GM12878 (cell line): ENCODE measurements at regions of chr17 and their contacts with region 1.

Region 1: GRCh38 chr17:49548506-49549310 is 27.0 kb upstream of the NXPH3 start:
- DNase-seq: no peak
- ATAC-seq: peak; percentile 81
- H3K4me3 ChIP-seq: no peak overlapping the region
- H3K27ac ChIP-seq: no peak overlapping the region
- H3K4me1 ChIP-seq: no peaks in the 10 kb centered on the region
- H3K27me3 ChIP-seq: 0 out of 4 replicates have a peak, but pooled peaks cover 0 to 2% of the 10 kb centered on the region in 2 experiments
- CTCF ChIP-seq: peak; percentile 44 to 57 (median 50); a peak in 4 of 6 replicates
- EP300 ChIP-seq: no peak
- POLR2A ChIP-seq: no peak
- RAD21 ChIP-seq: peak; percentile 69

Region 2: DNA sequence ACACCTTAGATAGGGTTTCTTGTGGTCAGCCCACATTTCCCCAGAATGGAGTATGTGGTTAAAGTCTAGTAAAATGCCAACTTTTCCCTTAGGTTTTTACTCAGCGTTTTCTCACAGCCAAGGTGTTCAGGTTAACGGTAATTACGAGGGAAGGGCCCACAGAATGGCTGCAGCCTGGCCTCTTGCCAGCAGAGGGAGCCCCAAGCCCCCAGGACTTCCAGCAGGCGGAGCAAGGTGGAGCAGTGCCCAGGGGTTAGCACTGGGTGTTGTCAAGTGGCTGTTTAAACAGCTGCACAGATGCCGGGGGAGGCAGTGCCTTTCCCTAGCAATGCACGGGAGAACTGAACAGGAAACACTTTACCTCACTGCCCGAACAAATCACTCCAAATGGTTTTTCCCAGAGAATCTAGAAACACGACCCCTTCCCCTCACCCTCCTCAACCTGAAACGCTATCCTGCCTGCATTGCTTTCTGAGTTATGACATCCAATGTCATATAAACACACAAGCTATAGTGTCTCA is 140.7 kb before region 1 on chr17:
- CTCF ChIA-PET with region 1: interaction called, 119 read pairs
- POLR2A ChIA-PET with region 1: interaction called, 3 read pairs
- RAD21 ChIA-PET with region 1: no interaction called
- SMC1A ChIA-PET with region 1: no interaction called
- in situ Hi-C with region 1: loop called (anchors 10 kb)
- intact Hi-C with region 1: loop called (anchors 2 kb)
- DNase-seq: no peak
- ATAC-seq: peak; percentile 100
- H3K4me3 ChIP-seq: no peak overlapping the region
- H3K27ac ChIP-seq: no peak overlapping the region
- H3K4me1 ChIP-seq: peaks cover 10% of the 10 kb centered on the region
- H3K27me3 ChIP-seq: no peaks in the 10 kb centered on the region
- CTCF ChIP-seq: peak; percentile 96 to 99 (median 98)
- EP300 ChIP-seq: no peak
- POLR2A ChIP-seq: no peak
- RAD21 ChIP-seq: peak; percentile 80

Region 3: GRCh38 chr17:49434821-49435670 is 113.7 kb before region 1 on chr17:
- CTCF ChIA-PET with region 1: interaction called, 5 read pairs
- POLR2A ChIA-PET with region 1: no interaction called
- RAD21 ChIA-PET with region 1: no interaction called
- SMC1A ChIA-PET with region 1: interaction called, 3 read pairs
- in situ Hi-C with region 1: loop called (anchors 5 kb)
- intact Hi-C with region 1: no loop called
- DNase-seq: no peak
- ATAC-seq: peak; percentile 90
- H3K4me3 ChIP-seq: no peak overlapping the region
- H3K27ac ChIP-seq: no peak overlapping the region
- H3K4me1 ChIP-seq: peaks cover 4% of the 10 kb centered on the region
- H3K27me3 ChIP-seq: no peaks in the 10 kb centered on the region; a peak in 1 of 4 replicates
- CTCF ChIP-seq: peak; percentile 66 to 80 (median 74)
- EP300 ChIP-seq: no peak
- POLR2A ChIP-seq: no peak
- RAD21 ChIP-seq: peak; percentile 77

Region 4: DNA sequence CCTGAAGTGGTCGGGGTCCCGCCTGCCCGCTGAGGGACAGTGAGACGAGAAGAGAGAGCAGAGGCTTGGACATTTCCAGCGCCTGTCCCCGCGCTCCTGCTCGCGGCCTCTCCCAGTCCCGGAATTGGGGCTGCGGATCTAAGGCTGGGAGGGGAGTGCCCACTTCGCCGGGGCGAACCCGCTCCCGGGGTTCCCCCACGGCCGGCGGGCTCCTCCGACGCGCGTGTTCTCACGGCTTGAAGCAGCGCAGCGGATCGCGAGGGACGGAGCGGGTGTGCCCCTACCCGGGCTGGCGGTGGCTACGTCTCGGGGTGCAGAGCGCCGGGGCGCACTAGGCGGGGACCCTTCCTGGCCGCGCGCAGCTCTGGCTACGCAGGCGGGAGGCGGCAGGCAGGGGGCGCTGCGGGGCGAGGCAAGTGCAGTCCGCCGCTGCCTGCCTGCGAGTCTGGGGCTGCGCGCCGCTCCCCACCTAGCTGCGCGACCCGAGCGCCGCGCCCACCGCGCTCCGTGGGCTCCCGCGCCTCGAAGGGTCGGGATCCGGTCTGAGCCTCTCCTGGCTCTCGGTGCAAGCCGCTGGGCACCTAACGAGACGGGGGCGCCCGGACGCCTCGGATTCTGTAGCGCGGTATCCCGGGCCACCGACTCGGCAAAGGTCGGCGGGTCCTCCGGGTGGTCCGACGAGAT is 52.4 kb before region 1 on chr17:
- CTCF ChIA-PET with region 1: no interaction called
- POLR2A ChIA-PET with region 1: no interaction called
- RAD21 ChIA-PET with region 1: no interaction called
- SMC1A ChIA-PET with region 1: no interaction called
- in situ Hi-C with region 1: loop called (anchors 5 kb)
- intact Hi-C with region 1: no loop called
- DNase-seq: no peak
- ATAC-seq: peak; percentile 94
- H3K4me3 ChIP-seq: peak overlapping the region; percentile 36; the same call in 1 of the 2 replicates
- H3K27ac ChIP-seq: no peak overlapping the region
- H3K4me1 ChIP-seq: peaks cover 9% of the 10 kb centered on the region; the same call in 1 of the 2 replicates
- H3K27me3 ChIP-seq: peaks cover 15 to 16% of the 10 kb centered on the region in 2 experiments
- CTCF ChIP-seq: peak; percentile 66 to 71 (median 67); a peak in 5 of 6 replicates
- EP300 ChIP-seq: no peak
- POLR2A ChIP-seq: no peak
- RAD21 ChIP-seq: peak; percentile 39

Region 5: GRCh38 chr17:49508061-49508865 is 40.4 kb before region 1 on chr17:
- CTCF ChIA-PET with region 1: no interaction called
- POLR2A ChIA-PET with region 1: no interaction called
- RAD21 ChIA-PET with region 1: no interaction called
- SMC1A ChIA-PET with region 1: no interaction called
- in situ Hi-C with region 1: no loop called
- intact Hi-C with region 1: no loop called
- DNase-seq: no peak
- ATAC-seq: peak; percentile 19; the same call in 2 of the 3 replicates
- H3K4me3 ChIP-seq: no peak overlapping the region
- H3K27ac ChIP-seq: no peak overlapping the region
- H3K4me1 ChIP-seq: no peaks in the 10 kb centered on the region
- H3K27me3 ChIP-seq: no peaks in the 10 kb centered on the region; a peak in 2 of 4 replicates
- CTCF ChIP-seq: no peak
- EP300 ChIP-seq: no peak
- POLR2A ChIP-seq: no peak
- RAD21 ChIP-seq: no peak